Activated CD4-positive, alpha-beta T cell treated with anti-CD3 and anti-CD28 coated beads for 36 hours (primary cell): ENCODE measurements at regions of chr6 and their contacts with region 1.

Region 1: GRCh38 chr6:36094753-36095496 is 35.4 kb upstream of the MAPK13 start:
- DNase-seq: peak; percentile 92
- ATAC-seq: peak; percentile 87
- H3K4me3 Mint-ChIP-seq: no peak overlapping the region
- H3K27ac Mint-ChIP-seq: peak overlapping the region; percentile 35
- H3K4me1 Mint-ChIP-seq: peaks cover 39% of the 10 kb centered on the region
- H3K27me3 Mint-ChIP-seq: no peaks in the 10 kb centered on the region

Region 2: DNA sequence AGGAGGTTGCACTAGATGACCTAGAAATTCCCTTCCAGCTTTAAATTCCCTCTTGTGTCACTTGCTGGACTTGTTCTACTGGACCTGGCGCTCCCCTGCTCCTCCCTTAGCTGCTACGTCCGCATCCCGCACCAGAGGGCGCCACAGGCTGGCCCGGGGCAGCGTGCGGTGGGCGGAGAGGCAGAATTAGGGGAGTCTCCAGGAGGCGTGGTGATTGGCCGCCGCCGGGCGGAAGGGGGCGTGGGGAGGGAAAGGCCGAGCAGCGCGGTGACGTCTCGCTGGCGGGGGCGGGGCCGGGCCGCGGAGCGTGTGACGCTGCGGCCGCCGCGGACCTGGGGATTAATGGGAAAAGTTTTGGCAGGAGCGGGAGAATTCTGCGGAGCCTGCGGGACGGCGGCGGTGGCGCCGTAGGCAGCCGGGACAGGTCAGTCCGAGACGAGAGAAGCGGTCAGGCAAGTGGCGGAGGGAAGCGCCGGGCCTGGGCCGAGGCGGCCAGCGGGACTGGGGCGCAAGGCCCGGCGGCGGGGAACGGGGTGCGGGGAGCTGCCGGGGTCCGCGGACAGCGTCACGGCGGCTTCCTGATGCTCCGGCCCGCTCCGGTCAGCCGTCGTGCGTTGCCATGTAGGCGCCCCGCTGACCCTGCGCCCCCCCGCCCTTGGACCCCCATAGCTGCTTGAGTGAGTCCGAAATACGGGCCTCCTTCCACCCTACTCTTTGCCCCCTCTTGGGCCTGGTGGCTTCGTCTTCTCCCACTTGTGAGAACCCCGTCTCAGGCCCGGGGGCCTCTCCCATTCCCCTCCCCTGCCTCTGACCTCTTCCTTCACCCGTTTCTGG is 752.5 kb before region 1 on chr6 and contains the start of gene PPARD:
- CTCF ChIA-PET with region 1: no interaction called
- POLR2A ChIA-PET with region 1: no interaction called
- intact Hi-C with region 1: no loop called
- DNase-seq: peak; percentile 99
- ATAC-seq: peak; percentile 98
- H3K4me3 Mint-ChIP-seq: peak within 1 kb of the TSS; percentile 87
- H3K27ac Mint-ChIP-seq: peak within 1 kb of the TSS; percentile 94
- H3K4me1 Mint-ChIP-seq: peaks cover 45% of the 10 kb centered on the region
- H3K27me3 Mint-ChIP-seq: no peaks in the 10 kb centered on the region
- total RNA-seq, gene PPARD: 16.5 to 19.2 TPM

Region 3: DNA sequence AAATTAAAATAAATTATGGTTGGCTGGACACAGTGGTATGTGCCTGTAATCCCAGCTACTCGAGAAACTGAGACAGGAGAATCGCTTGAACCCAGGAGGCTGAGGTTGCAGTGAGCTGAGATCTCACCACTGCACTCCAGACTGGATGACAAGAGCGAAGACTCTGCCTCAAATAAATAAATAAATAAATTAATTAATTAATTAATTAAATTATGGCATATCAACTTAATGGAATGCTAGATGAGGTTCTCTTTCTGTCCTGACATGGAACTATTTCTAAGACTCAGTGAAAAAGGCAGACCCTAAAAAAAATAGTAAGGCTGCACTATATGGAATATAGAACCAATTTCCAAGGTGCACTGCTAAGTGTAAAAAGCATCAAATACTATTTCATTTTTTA is 178.9 kb before region 1 on chr6:
- CTCF ChIA-PET with region 1: interaction called, 10 read pairs
- POLR2A ChIA-PET with region 1: no interaction called
- intact Hi-C with region 1: loop called in 1 of 2 experiments (anchors 2 kb)
- DNase-seq: no peak
- ATAC-seq: no peak
- H3K4me3 Mint-ChIP-seq: no peak overlapping the region
- H3K27ac Mint-ChIP-seq: no peak overlapping the region
- H3K4me1 Mint-ChIP-seq: peaks cover 23% of the 10 kb centered on the region
- H3K27me3 Mint-ChIP-seq: no peaks in the 10 kb centered on the region

Region 4: GRCh38 chr6:36033935-36034334 is 61.0 kb before region 1 on chr6:
- CTCF ChIA-PET with region 1: interaction called, 183 read pairs
- POLR2A ChIA-PET with region 1: interaction called, 8 read pairs
- intact Hi-C with region 1: no loop called
- DNase-seq: peak; percentile 75
- ATAC-seq: peak; percentile 90
- H3K4me3 Mint-ChIP-seq: no peak overlapping the region
- H3K27ac Mint-ChIP-seq: peak overlapping the region; percentile 10
- H3K4me1 Mint-ChIP-seq: peaks cover 73% of the 10 kb centered on the region
- H3K27me3 Mint-ChIP-seq: no peaks in the 10 kb centered on the region

Region 5: DNA sequence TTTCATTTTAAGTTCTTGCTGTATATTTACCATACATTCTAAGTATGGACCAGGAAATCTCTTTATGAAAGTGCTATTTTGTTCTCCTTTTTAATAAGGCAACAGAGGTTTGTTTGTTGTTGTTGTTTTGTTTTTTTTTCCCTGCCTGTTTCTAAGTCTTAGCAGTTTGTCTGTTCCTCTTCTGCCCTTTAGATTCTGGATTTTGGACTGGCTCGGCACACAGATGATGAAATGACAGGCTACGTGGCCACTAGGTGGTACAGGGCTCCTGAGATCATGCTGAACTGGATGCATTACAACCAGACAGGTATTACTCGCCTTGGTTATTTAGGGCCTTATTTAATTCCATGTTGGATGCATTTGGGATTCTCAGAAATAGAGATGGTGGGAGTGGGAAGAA is 19.3 kb before region 1 on chr6:
- CTCF ChIA-PET with region 1: interaction called, 55 read pairs
- POLR2A ChIA-PET with region 1: interaction called, 3 read pairs
- intact Hi-C with region 1: no loop called
- DNase-seq: no peak
- ATAC-seq: no peak
- H3K4me3 Mint-ChIP-seq: no peak overlapping the region
- H3K27ac Mint-ChIP-seq: no peak overlapping the region
- H3K4me1 Mint-ChIP-seq: peaks cover 26% of the 10 kb centered on the region
- H3K27me3 Mint-ChIP-seq: no peaks in the 10 kb centered on the region

Region 6: DNA sequence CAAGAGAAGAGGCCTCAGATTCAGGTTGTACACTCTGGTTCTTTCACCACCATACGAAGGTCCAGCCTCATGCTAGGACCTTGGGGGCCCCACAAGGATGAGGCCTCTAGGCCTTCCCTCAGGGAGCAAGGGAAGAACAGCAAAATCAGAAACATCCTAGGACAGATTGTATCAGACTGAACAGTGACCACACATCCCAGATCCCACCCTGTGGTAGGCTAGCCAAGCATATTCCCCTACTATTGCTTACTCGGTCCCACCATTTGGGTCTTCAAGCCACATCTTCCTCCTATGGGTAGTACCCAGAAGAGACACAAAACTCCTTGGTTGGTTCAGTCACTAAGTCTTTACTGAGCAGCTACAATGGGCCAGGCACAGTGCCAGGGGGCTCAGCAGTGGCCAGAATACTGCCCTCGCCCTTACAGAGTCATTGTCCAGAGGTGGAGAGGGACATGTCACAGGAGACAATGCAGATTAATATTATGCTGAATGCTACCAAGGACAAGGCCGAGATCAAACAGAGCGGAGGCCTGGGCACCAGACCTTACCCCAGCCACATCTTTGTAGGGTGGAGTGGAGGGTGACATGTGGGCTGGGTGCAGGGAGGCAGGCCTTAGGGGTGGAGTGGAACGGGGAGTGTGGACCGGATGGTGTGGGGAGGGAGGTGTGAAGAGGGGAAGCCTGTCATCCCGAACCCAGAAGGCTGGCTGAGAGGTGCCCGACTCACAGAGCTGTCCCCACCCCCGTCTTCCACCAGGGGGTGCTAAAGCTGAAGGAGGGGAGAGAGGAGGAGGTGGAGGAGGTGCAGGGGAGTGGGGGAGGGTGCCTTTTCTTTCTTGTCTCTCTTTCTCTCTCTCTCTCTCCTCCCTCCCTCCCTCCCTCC is 28.6 kb after region 1 on chr6:
- CTCF ChIA-PET with region 1: interaction called, 16 read pairs
- POLR2A ChIA-PET with region 1: no interaction called
- intact Hi-C with region 1: no loop called
- DNase-seq: peak; percentile 95
- ATAC-seq: peak; percentile 77
- H3K4me3 Mint-ChIP-seq: peak overlapping the region; percentile 27
- H3K27ac Mint-ChIP-seq: peak overlapping the region; percentile 64
- H3K4me1 Mint-ChIP-seq: peaks cover 89% of the 10 kb centered on the region
- H3K27me3 Mint-ChIP-seq: no peaks in the 10 kb centered on the region

Region 7: GRCh38 chr6:36196880-36197548 is 102.1 kb after region 1 on chr6:
- CTCF ChIA-PET with region 1: interaction called, 5 read pairs
- POLR2A ChIA-PET with region 1: no interaction called
- intact Hi-C with region 1: loop called in 1 of 2 experiments (anchors 1 kb)
- DNase-seq: peak; percentile 100
- ATAC-seq: peak; percentile 96
- H3K4me3 Mint-ChIP-seq: peak overlapping the region; percentile 82
- H3K27ac Mint-ChIP-seq: peak overlapping the region; percentile 90
- H3K4me1 Mint-ChIP-seq: peaks cover 45% of the 10 kb centered on the region
- H3K27me3 Mint-ChIP-seq: no peaks in the 10 kb centered on the region